ENCODE measurements at regions of chr12 and their contacts with region 1.

Region 1: DNA sequence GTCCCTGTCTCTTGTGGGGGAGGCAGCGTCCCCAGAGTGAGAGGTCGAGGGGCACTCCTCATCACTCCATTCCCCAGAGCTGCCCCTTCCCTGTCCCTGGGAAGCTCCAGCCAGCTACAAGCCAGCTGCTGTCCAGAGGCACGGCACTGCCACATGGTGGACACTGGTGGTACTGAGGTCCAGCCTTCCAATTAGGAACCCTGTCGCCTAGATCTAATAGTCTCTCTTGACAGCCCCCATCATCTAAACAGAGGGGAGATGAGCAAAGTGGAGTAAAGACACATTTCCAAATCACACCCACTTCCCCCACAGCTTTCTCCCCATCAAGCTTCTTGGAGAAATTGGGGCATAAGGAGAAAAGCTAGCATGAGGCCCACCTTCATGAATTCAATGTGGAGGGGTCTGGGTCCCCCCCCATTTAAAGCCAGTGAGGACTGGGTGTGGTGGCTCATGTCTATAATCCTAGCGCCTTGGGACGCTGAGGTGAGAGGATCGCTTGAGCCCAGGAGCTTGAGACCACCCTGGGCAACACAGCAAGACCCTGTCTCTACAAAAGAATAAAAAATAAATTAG is 2.1 kb upstream of the INHBE start:
- DNase-seq: no peak
- H3K4me3 ChIP-seq: no peak overlapping the region
- H3K27ac ChIP-seq: peak overlapping the region in 2 of 4 donors; percentile 57 to 62
- H3K4me1 ChIP-seq: peaks cover 12 to 18% (median 15%) of the 10 kb centered on the region in 4 donors
- H3K27me3 ChIP-seq: peaks cover 0 to 15% (median 0%) of the 10 kb centered on the region in 4 donors
- CTCF ChIP-seq: peak; percentile 91 to 97 (median 93)
- EP300 ChIP-seq: no peak
- POLR2A ChIP-seq: no peak

Region 2: GRCh38 chr12:57268264-57268663 is 184.8 kb before region 1 on chr12:
- intact Hi-C with region 1: loop called (anchors 2 kb)
- DNase-seq: no peak
- H3K4me3 ChIP-seq: no peak overlapping the region
- H3K27ac ChIP-seq: no peak overlapping the region
- H3K4me1 ChIP-seq: peaks cover 0 to 9% (median 7%) of the 10 kb centered on the region in 4 donors
- H3K27me3 ChIP-seq: no peaks in the 10 kb centered on the region
- CTCF ChIP-seq: no peak
- EP300 ChIP-seq: no peak
- POLR2A ChIP-seq: no peak

Region 3: DNA sequence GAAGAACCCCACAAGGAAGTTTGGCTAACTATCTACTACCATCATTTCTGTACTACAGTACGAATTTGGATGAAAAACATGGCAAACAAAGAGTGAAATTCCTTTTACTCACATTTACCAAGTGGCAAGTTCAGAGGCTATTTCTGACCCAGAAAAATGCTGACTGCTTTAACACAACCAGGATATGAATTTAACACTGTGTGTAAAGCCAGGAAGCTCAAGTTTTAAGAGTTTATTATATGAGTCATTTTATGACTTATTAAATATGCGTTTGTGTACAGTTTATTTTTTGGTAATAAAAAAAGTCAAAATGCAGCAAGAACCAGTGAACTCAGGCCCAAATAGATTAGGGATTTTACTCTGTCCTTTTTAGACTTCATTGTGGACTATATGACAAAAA is 143.6 kb before region 1 on chr12:
- intact Hi-C with region 1: loop called (anchors 2 kb)
- DNase-seq: no peak
- H3K4me3 ChIP-seq: no peak overlapping the region
- H3K27ac ChIP-seq: no peak overlapping the region
- H3K4me1 ChIP-seq: no peaks in the 10 kb centered on the region
- H3K27me3 ChIP-seq: no peaks in the 10 kb centered on the region
- CTCF ChIP-seq: no peak
- EP300 ChIP-seq: no peak
- POLR2A ChIP-seq: no peak

Region 4: DNA sequence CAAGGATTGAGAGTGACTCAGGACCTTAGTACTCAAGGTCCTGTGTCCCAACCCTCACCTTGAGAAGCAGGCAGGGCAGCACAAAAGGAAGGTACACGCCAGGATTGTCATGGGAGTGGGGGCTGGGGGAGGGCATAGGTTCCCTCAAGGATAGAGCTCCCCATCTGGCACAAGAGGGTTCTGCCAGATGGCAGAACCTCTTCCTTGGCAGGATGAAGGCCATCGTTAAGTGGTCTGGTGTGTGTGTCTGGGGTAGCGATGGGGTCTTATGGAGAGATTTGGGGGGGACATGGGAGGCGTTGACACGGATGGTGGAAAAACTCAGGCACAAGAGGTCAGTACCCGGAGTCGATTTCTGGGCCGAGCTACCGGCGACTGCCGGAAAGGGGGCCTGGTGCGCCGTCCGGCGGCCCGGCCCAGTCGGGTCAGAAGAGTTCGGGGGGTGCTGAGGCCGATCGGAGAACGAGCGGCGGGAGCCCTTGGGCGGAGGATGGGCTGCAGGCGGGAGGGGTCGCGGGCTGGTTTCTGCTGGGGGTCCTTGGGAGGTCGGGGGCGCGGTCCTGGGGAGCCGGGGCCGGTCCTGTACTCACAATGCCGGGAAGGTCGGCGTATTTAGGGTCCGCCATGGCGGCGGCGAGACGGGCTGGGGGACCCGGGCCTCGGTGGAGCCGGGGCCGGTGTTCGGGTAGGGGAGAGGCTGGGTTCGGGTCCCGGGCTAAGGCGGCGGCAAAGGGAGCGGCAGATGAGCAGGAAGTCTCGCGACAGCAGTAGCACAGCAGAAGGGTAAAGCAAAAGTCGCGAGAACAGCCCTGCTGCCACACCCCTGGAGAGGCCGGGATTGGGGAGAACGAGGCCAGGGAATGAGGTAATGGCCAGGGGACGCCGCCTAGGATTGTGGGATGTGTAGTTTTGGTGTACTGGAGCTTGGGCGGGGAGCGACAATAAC is 93.7 kb after region 1 on chr12 and contains the start of gene DCTN2:
- intact Hi-C with region 1: no loop called
- DNase-seq: peak; percentile 98
- H3K4me3 ChIP-seq: peak within 1 kb of the TSS; percentile 79 to 97 (median 90)
- H3K27ac ChIP-seq: peak within 1 kb of the TSS; percentile 89 to 95 (median 92)
- H3K4me1 ChIP-seq: peaks cover 44 to 51% (median 48%) of the 10 kb centered on the region in 4 donors
- H3K27me3 ChIP-seq: peaks cover 0 to 27% (median 3%) of the 10 kb centered on the region in 4 donors
- CTCF ChIP-seq: peak in 2 of 3 experiments; percentile 5 to 9
- EP300 ChIP-seq: no peak
- POLR2A ChIP-seq: peak; percentile 16
- total RNA-seq, gene DCTN2: 161 to 243 (median 202) TPM